ENCODE measurements at regions of chr2 and their contacts with region 1.

Region 1: GRCh38 chr2:206521612-206522011 is 78.3 kb downstream of the ADAM23 start:
- DNase-seq: no peak
- H3K4me3 ChIP-seq: no peak overlapping the region
- H3K27ac ChIP-seq: no peak overlapping the region
- H3K4me1 ChIP-seq: no peaks in the 10 kb centered on the region
- H3K27me3 ChIP-seq: no peaks in the 10 kb centered on the region
- CTCF ChIP-seq: no peak
- POLR2A ChIP-seq: no peak

Region 2: DNA sequence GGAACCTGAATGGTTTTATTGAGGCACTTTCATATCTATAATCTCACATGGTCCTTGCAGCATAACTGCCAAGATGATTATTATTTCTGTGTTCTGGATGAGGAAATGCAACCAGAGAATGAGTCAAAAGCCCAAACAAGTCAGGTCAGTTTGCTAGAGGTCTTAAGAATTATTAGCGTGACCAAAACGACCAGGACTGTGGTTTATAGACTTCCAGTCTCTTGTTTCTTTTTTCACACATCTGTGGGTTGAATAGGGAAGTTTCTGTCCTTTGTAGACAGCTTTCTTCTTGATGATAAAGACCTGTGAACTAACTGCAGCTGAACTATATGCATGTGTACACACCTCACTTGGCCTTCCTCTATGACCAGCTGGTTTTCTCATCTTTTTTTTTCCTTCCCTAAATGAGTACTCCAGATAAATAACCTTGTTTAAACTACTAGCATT is 64.4 kb before region 1 on chr2:
- intact Hi-C with region 1: loop called (anchors 2 kb)
- DNase-seq: no peak
- H3K4me3 ChIP-seq: no peak overlapping the region
- H3K27ac ChIP-seq: no peak overlapping the region
- H3K4me1 ChIP-seq: no peaks in the 10 kb centered on the region
- H3K27me3 ChIP-seq: no peaks in the 10 kb centered on the region
- CTCF ChIP-seq: no peak
- POLR2A ChIP-seq: no peak

Measured in breast epithelium (tissue), 4 donors.